Activated T-helper 2 cell treated with anti-CD3 and anti-CD28 coated beads, Interferon-gamma antibody, Interleukin-2, Interleukin-4, amounts not matched to agents 10 μg/mL and 5 μg/mL and 100 μg/mL, durations not matched to agents 14 hours and 24 hours and 36 hours (primary cell): ENCODE measurements at regions of chr5 and their contacts with region 1.

Region 1: GRCh38 chr5:50501491-50502228 is 60.6 kb upstream of the EMB start:
- DNase-seq: no peak
- H3K4me3 Mint-ChIP-seq: no peak overlapping the region
- H3K27ac Mint-ChIP-seq: no peak overlapping the region
- H3K4me1 Mint-ChIP-seq: peaks cover 28% of the 10 kb centered on the region
- H3K27me3 Mint-ChIP-seq: peaks cover 15% of the 10 kb centered on the region

Region 2: GRCh38 chr5:50325237-50325832 is 176.3 kb before region 1 on chr5:
- intact Hi-C with region 1: loop called (anchors 2 kb)
- DNase-seq: no peak
- H3K4me3 Mint-ChIP-seq: no peak overlapping the region
- H3K27ac Mint-ChIP-seq: no peak overlapping the region
- H3K4me1 Mint-ChIP-seq: peaks cover 12% of the 10 kb centered on the region
- H3K27me3 Mint-ChIP-seq: peaks cover 17% of the 10 kb centered on the region

Region 3: DNA sequence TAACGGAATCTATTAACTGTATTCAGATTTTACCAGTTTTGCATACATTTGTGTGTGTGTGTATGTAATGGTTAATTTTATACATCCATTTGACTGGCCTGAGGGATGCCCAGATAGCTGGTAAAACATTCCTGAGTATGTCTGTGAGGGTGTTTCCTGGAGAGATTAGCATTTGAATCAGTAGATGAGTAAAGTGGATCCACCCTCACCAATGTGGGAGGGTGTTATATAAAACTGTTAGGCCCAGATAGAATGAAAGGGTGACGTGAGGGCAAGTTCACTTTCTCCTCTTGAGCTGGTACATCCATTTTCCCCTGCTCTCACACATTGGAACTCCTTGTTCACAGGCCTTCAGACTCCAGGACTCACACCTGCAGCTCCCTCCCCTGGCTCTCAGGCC is 149.3 kb before region 1 on chr5:
- intact Hi-C with region 1: no loop called
- DNase-seq: no peak
- H3K4me3 Mint-ChIP-seq: no peak overlapping the region
- H3K27ac Mint-ChIP-seq: no peak overlapping the region
- H3K4me1 Mint-ChIP-seq: no peaks in the 10 kb centered on the region
- H3K27me3 Mint-ChIP-seq: no peaks in the 10 kb centered on the region

Region 4: GRCh38 chr5:50564079-50564478 is 62.4 kb after region 1 on chr5:
- intact Hi-C with region 1: loop called (anchors 2 kb)
- DNase-seq: peak; percentile 38
- H3K4me3 Mint-ChIP-seq: peak overlapping the region; percentile 45
- H3K27ac Mint-ChIP-seq: peak overlapping the region; percentile 46
- H3K4me1 Mint-ChIP-seq: peaks cover 36% of the 10 kb centered on the region
- H3K27me3 Mint-ChIP-seq: no peaks in the 10 kb centered on the region

Region 5: DNA sequence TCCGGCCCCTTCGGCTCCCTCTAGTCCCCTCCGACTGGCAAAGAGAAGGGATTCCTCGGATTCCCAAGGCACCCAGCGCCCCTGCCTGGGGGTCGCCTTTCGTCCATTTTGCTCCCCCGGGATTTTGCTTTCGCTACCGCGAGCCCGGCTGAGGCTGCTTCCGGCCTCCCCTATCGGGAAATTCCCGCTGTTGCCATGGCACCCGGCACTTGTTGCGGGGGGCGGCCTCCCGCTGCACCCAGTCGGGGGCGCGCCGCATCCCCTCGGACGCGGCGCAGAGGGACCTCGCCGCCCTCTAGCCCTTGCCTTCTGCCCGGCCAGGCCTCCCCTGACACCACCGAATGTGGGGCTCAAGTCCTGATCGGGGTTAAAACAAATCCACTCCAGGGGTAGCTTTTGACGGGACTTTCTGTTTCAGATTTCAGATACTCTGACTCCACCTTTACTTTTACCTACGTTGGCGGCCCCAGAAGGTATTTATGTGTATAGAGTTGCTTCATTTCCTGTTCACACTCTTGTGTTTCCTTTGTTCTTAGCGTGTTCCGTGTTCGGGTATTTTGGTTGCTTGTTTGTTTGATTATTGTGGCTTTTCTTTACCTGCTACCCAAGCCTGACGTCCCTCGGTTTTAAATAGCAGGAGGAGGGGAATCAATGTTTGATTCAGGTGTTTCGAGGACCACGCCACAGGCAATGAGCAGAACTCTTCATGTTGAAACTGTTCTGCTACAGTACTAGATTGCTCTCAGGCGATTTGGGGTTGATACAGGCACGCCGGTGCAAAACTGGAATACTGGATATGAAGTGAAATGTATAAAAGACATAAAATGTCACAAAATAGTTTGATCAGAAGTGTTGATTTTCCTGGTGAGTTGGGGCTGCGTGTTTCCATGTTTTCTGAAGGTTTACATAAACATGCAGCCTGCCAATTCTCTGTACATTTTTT is 166.3 kb after region 1 on chr5:
- intact Hi-C with region 1: loop called (anchors 5 kb)
- DNase-seq: peak; percentile 74
- H3K4me3 Mint-ChIP-seq: peak overlapping the region; percentile 98
- H3K27ac Mint-ChIP-seq: peak overlapping the region; percentile 100
- H3K4me1 Mint-ChIP-seq: peaks cover 47% of the 10 kb centered on the region
- H3K27me3 Mint-ChIP-seq: no peaks in the 10 kb centered on the region

Region 6: GRCh38 chr5:50711273-50711672 is 209.6 kb after region 1 on chr5:
- intact Hi-C with region 1: no loop called
- DNase-seq: peak; percentile 65
- H3K4me3 Mint-ChIP-seq: peak overlapping the region; percentile 74
- H3K27ac Mint-ChIP-seq: peak overlapping the region; percentile 91
- H3K4me1 Mint-ChIP-seq: peaks cover 50% of the 10 kb centered on the region
- H3K27me3 Mint-ChIP-seq: no peaks in the 10 kb centered on the region

Region 7: DNA sequence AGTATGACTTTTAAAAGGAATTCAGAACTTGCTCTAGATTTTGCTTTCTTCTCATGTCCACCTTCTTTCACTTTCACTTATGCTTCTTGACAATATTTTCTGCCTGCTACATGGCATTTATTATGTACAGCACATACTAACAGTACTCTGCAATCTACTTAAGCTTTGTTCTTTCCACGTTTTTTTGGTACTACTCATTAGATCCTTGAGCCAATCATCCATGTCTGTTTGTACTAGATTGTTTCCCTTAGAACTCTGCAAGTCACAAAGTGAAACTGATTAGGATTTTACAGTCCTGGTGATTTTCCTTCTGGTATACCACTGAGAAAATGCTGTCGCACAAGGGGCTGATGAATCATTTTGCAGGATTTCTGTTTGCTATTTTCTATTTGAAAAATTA is 243.1 kb after region 1 on chr5:
- intact Hi-C with region 1: loop called (anchors 5 kb)
- DNase-seq: no peak
- H3K4me3 Mint-ChIP-seq: peak overlapping the region; percentile 79
- H3K27ac Mint-ChIP-seq: peak overlapping the region; percentile 83
- H3K4me1 Mint-ChIP-seq: peaks cover 56% of the 10 kb centered on the region
- H3K27me3 Mint-ChIP-seq: no peaks in the 10 kb centered on the region